SK-N-SH (cell line): ENCODE measurements at regions of chr1 and their contacts with region 1.

Region 1: DNA sequence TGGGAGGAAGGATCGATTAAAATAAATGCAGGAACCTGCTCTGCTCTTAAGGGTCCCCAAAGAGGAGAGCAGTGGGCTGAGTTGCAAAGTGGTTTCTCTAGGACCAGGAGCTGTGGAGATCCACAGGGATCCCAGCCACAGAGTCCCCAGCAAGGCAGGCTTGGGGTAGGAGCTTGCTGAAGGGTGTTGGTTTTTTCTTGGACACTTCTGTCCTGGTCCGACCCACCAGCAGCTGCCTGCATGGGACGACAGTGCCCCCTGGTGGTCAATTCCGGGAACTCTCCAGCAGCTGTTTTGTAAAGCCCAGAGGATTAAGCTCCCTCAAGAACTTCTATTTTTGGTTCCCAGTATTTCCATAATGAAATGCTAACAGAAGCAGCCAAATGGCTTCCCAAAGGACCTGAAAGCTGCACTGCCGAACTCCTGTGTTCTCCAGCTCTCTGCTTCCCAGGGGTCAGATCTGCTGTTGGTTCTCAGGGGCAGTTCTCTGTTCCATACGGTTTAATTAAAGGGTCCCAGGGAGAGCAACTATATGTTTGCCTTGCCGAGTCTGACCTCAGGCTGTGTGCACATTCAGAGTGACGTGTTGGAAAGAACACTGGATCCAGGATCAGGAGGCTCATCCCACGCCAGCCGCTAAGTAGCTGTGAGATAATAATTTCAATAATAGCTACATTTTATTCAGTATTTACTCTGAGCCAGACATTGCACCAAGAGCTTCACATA is 23.2 kb downstream of the NENF start:
- DNase-seq: peak; percentile 83
- H3K4me3 ChIP-seq: no peak overlapping the region; a peak in 1 of 4 replicates
- H3K27ac ChIP-seq: no peak overlapping the region
- H3K4me1 ChIP-seq: peaks cover 0 to 14% of the 10 kb centered on the region in 2 experiments; a peak in 1 of 4 replicates
- H3K27me3 ChIP-seq: no peaks in the 10 kb centered on the region
- CTCF ChIP-seq: peak; percentile 97
- EP300 ChIP-seq: no peak
- RAD21 ChIP-seq: peak; percentile 98

Region 2: DNA sequence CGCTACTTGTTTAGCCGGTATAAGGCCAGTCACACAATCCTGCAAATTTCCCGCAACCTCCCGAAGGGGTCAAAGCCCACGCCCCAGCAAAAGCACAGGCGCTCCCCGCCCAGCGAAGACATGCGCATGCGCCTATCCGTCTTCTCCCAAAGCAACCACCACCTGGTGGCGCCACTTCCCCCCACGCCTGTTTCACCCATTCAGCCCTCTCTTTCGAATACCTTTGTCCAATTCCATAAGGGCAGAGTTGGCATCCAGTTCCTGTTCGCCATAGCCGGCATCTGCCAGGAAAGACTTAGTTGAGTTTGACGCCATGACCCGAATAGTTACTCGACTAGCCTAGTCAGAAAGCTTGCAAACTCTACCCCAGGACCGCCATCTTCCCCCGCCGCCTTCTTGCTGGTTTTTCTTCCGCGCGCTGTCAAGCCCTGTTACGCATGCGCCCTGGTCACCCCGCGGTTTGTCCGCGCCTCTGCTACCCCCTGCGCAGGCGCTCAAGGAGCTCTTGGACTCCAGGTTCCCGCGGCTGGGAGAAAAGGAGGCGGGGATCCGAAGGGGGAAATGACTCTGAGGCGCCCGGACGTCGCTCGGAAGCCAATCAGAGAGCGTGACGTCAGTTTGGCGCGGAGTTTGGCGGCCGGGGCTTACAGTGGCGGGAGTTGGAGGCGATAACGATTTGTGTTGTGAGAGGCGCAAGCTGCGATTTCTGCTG is 420.7 kb before region 1 on chr1 and contains the starts of genes DTL and INTS7:
- CTCF ChIA-PET with region 1: interaction called, 16 read pairs
- POLR2A ChIA-PET with region 1: interaction called, 3 read pairs
- DNase-seq: peak; percentile 94
- H3K4me3 ChIP-seq: peak within 1 kb of the TSS; percentile 89 to 99
- H3K27ac ChIP-seq: peak within 1 kb of the TSS; percentile 81 to 93
- H3K4me1 ChIP-seq: peaks cover 18 to 22% of the 10 kb centered on the region in 2 experiments; a peak in 3 of 4 replicates
- H3K27me3 ChIP-seq: no peaks in the 10 kb centered on the region
- CTCF ChIP-seq: peak; percentile 92
- EP300 ChIP-seq: peak in 1 of 2 experiments; percentile 27; a peak in 1 of 4 replicates
- RAD21 ChIP-seq: no peak
- polyA plus RNA-seq, gene DTL: 9.3 and 12.6 TPM in 2 replicates
- polyA plus RNA-seq, gene INTS7: 8.7 and 11.7 TPM in 2 replicates

Region 3: GRCh38 chr1:212077051-212077450 is 378.9 kb before region 1 on chr1:
- CTCF ChIA-PET with region 1: interaction called, 187 read pairs
- POLR2A ChIA-PET with region 1: no interaction called
- DNase-seq: no peak
- H3K4me3 ChIP-seq: no peak overlapping the region
- H3K27ac ChIP-seq: no peak overlapping the region
- H3K4me1 ChIP-seq: no peaks in the 10 kb centered on the region; a peak in 1 of 4 replicates
- H3K27me3 ChIP-seq: no peaks in the 10 kb centered on the region
- CTCF ChIP-seq: no peak
- EP300 ChIP-seq: no peak
- RAD21 ChIP-seq: no peak

Region 4: GRCh38 chr1:212291505-212292134 is 164.3 kb before region 1 on chr1:
- CTCF ChIA-PET with region 1: interaction called, 26 read pairs
- POLR2A ChIA-PET with region 1: no interaction called
- DNase-seq: peak; percentile 71
- H3K4me3 ChIP-seq: no peak overlapping the region
- H3K27ac ChIP-seq: no peak overlapping the region
- H3K4me1 ChIP-seq: peaks cover 7 to 32% of the 10 kb centered on the region in 2 experiments; a peak in 3 of 4 replicates
- H3K27me3 ChIP-seq: no peaks in the 10 kb centered on the region
- CTCF ChIP-seq: peak; percentile 75
- EP300 ChIP-seq: no peak
- RAD21 ChIP-seq: peak; percentile 90

Region 5: GRCh38 chr1:212432706-212433576 is 23.0 kb before region 1 on chr1 and contains the start of gene NENF:
- CTCF ChIA-PET with region 1: interaction called, 17 read pairs
- POLR2A ChIA-PET with region 1: no interaction called
- DNase-seq: peak; percentile 98
- H3K4me3 ChIP-seq: peak within 1 kb of the TSS; percentile 66 to 80
- H3K27ac ChIP-seq: peak within 1 kb of the TSS in 1 of 2 experiments; percentile 69; a peak in 2 of 4 replicates
- H3K4me1 ChIP-seq: peaks cover 0 to 14% of the 10 kb centered on the region in 2 experiments; a peak in 1 of 4 replicates
- H3K27me3 ChIP-seq: no peaks in the 10 kb centered on the region
- CTCF ChIP-seq: no peak
- EP300 ChIP-seq: no peak
- RAD21 ChIP-seq: no peak
- polyA plus RNA-seq, gene NENF: 59.6 and 78.7 TPM in 2 replicates

Region 6: DNA sequence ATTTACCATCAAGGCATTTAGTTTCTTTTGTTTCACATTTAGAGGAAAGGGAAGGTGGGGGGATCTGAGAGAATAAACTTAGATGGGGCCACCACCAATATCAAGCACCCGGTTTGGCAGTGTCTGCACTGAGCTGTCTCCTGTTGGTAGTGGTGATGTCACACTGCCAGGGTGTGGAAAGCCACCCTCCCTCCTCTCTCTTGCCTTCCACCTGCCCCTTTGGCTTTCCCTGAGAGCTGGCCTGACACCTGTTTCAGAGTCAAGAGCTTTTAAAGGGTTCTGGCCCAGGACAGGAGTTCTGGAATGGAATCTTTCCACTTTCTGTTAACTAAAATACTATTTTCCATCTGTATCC is 166.0 kb after region 1 on chr1:
- CTCF ChIA-PET with region 1: no interaction called
- POLR2A ChIA-PET with region 1: no interaction called
- DNase-seq: no peak
- H3K4me3 ChIP-seq: no peak overlapping the region
- H3K27ac ChIP-seq: no peak overlapping the region
- H3K4me1 ChIP-seq: no peaks in the 10 kb centered on the region
- H3K27me3 ChIP-seq: peaks cover 11% of the 10 kb centered on the region; the same call in 1 of the 2 replicates
- CTCF ChIP-seq: no peak
- EP300 ChIP-seq: no peak
- RAD21 ChIP-seq: no peak

Region 7: GRCh38 chr1:212738330-212738729 is 282.4 kb after region 1 on chr1:
- CTCF ChIA-PET with region 1: no interaction called
- POLR2A ChIA-PET with region 1: no interaction called
- DNase-seq: no peak
- H3K4me3 ChIP-seq: no peak overlapping the region
- H3K27ac ChIP-seq: no peak overlapping the region
- H3K4me1 ChIP-seq: no peaks in the 10 kb centered on the region; a peak in 1 of 4 replicates
- H3K27me3 ChIP-seq: no peaks in the 10 kb centered on the region
- CTCF ChIP-seq: no peak
- EP300 ChIP-seq: no peak
- RAD21 ChIP-seq: no peak

Region 8: DNA sequence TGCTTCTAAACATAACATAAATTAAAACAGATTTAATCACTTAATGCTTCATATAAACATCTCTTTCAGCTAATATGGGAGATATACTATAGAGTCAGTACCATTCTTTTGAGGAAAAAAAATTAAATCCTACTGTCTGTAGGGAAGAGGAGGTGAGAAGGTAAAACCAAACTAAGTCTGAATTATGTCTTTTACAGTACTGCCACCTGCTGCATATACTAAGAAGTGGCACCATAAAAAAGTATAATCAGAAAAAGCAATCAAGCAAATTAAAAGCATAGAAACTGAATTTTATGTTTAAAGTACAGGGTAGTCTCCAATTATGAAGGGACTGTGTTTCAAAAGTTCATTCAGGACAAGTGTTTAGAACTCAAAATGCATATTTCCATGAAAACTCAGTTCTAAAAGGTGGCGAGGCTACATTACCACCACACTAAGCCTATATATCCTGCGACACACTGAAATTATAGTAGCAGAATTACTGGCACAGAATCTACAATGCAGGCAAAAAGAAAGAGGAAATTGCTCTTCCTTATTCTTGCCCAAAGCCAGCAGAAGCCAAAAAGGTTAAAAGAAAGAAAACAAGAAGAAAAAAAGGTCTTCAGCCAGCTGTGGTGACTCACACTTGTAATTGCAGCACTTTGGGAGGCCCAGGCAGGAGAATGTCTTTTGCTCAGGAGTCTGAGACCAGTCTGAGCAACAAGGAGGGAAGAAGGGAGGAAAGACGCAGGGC is 326.6 kb after region 1 on chr1:
- CTCF ChIA-PET with region 1: interaction called, 14 read pairs
- POLR2A ChIA-PET with region 1: no interaction called
- DNase-seq: peak; percentile 41
- H3K4me3 ChIP-seq: no peak overlapping the region; a peak in 1 of 4 replicates
- H3K27ac ChIP-seq: no peak overlapping the region
- H3K4me1 ChIP-seq: no peaks in the 10 kb centered on the region
- H3K27me3 ChIP-seq: no peaks in the 10 kb centered on the region
- CTCF ChIP-seq: peak; percentile 74
- EP300 ChIP-seq: no peak
- RAD21 ChIP-seq: peak; percentile 79